Transverse colon (tissue), 4 donors: ENCODE measurements at regions of chr5 and their contacts with region 1.

Region 1: GRCh38 chr5:140401362-140402257 is at the start of gene ANKHD1:
- DNase-seq: peak; percentile 98
- H3K4me3 ChIP-seq: peak within 1 kb of the TSS; percentile 84 to 90 (median 89)
- H3K27ac ChIP-seq: peak within 1 kb of the TSS; percentile 94 to 99 (median 97)
- H3K4me1 ChIP-seq: peaks cover 18 to 41% (median 33%) of the 10 kb centered on the region in 4 donors
- H3K27me3 ChIP-seq: no peaks in the 10 kb centered on the region
- CTCF ChIP-seq: peak in 2 of 5 experiments; percentile 6 to 7
- EP300 ChIP-seq: no peak
- POLR2A ChIP-seq: peak; percentile 98
- total RNA-seq, gene ANKHD1: 113 to 212 (median 164) TPM

Region 2: DNA sequence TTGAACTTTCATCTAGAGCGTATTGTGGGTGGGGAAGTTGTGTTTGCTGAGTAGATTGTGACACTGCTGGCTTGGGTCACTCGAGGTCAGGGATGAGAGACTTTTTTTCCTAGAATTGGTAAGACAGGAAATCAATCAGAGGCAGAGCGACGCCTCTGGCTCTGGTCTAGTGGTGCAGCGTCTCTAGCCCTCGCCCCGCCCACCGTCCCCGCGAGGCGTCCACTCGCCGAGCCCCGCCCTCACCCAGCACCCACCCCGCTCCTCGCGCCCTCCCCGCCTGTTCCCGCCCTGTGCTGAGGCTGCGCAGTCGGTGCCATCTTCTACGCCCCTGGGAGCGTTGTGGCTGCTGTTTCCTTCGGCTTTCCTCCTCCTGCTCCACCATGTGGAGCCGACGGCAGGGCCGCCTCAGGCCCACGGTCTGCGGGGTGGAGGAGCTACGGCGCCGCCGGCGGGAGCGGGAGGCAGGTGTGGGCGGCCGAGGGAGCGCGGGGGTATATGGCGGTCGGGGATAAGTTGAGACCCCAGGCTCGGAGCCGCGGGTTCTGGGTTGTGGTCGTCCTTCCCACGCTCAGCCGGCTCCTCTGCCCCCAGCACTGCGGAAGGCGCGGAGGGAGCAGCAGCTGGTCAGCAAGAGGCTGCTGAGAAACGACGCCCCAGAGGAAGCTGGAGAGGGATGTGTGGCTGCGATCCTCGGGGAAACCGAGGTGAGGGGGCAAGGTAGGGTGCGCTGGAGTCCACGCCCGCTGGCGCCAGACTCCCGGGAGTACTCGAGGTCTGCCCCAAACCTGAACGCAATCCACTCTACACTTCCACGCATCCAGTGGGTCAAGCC is 237.8 kb after region 1 on chr5 and contains the start of gene TMCO6:
- in situ Hi-C with region 1: no loop called
- intact Hi-C with region 1: loop called (anchors 10 kb)
- DNase-seq: peak; percentile 99
- H3K4me3 ChIP-seq: peak within 1 kb of the TSS; percentile 62 to 95 (median 65)
- H3K27ac ChIP-seq: peak within 1 kb of the TSS; percentile 90 to 97 (median 92)
- H3K4me1 ChIP-seq: peaks cover 0 to 20% (median 14%) of the 10 kb centered on the region in 4 donors
- H3K27me3 ChIP-seq: no peaks in the 10 kb centered on the region
- CTCF ChIP-seq: peak; percentile 59 to 83 (median 70)
- EP300 ChIP-seq: no peak
- POLR2A ChIP-seq: peak; percentile 75
- total RNA-seq, gene TMCO6: 0.75 to 99.2 (median 40.2) TPM

Region 3: DNA sequence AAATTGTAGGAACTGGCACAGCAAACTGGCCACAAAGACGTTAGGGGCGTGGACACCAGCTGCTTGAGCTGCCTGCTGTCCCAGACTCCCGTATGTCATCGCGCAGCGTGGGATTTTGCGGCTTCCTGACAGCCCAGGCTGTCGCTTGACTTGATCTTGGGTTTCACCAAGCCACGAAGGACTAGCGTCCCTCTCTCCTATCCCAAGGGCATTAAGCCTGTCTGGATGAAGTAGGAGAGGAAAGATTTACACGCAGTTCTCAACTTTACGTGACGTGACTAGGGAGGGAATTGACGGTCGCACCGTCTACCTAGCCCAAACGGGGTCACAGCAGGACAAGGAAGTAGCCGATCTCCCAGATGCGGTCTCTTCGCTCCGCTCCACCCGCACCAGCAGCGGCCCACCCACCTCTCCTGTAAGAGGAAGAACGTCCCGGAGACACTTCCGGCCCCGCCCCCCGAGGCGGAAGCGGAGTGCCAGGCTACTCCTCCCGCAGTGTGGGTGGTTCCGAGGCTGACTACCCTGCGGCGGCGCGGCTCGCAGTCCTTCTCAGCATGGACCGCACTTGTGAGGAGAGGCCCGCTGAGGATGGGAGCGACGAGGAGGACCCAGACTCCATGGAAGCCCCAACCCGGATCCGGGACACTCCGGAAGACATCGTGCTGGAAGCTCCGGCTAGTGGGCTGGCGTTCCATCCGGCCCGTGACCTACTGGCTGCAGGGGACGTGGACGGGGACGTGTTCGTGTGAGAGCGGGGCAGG is 262.9 kb after region 1 on chr5 and contains the start of gene WDR55:
- in situ Hi-C with region 1: loop called in 1 of 4 experiments (anchors 25 kb)
- intact Hi-C with region 1: no loop called
- DNase-seq: peak; percentile 98
- H3K4me3 ChIP-seq: peak within 1 kb of the TSS; percentile 73 to 87 (median 79)
- H3K27ac ChIP-seq: peak within 1 kb of the TSS; percentile 88 to 95 (median 94)
- H3K4me1 ChIP-seq: peaks cover 12 to 27% (median 13%) of the 10 kb centered on the region in 4 donors
- H3K27me3 ChIP-seq: no peaks in the 10 kb centered on the region
- CTCF ChIP-seq: no peak
- EP300 ChIP-seq: peak; percentile 1
- POLR2A ChIP-seq: peak; percentile 93
- total RNA-seq, gene WDR55: 33.3 to 76.6 (median 36.1) TPM

Region 4: DNA sequence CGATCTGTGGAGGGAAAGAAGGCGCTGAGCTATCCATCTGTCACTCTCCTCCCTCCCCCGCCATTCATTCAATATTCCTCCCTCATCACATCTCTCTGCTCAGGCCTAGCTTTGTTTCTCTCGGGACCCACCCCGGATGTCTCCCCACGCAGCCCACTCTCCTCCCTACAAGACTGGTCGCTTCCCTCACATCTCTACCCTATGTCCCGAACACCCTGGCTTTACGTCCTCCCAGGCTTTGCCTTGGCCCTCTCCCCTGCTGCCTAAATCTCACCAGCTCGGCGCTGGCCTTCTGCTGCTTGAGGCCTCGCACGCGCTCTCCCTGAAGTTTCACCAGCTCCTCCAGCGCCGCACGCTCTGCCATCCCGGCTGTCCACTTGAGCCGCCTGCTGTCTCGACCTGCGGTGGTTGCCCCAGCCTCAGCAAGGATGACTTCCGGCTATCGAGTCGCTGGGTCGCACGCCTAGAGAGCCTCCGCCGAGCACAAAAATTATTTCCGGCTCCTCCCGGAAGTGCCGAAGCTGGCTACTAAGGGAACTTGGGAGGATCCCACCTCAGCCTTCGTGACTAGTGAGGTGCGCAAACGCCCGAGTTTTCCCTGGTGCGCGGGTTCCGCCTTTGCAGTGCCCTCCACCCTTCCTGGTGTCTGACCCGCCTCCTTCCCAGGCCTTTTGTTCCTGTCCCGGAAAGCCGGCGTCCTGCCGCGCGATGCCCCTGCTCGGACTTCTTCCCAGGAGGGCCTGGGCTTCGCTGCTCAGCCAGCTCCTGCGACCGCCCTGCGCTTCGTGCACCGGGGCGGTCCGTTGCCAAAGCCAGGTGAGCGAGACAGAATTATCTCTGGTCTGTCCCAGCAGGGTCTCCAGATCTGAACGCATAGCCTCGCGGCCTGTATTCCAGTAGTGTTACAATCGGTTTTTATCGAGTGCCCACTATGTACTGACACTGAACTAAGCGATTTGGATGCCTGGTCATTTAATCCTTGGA is 289.6 kb after region 1 on chr5 and contains the starts of genes HARS1 and HARS2:
- in situ Hi-C with region 1: loop called in 1 of 4 experiments (anchors 25 kb)
- intact Hi-C with region 1: no loop called
- DNase-seq: peak; percentile 94
- H3K4me3 ChIP-seq: peak within 1 kb of the TSS; percentile 64 to 75 (median 70)
- H3K27ac ChIP-seq: peak within 1 kb of the TSS; percentile 89 to 94 (median 92)
- H3K4me1 ChIP-seq: peaks cover 14 to 30% (median 16%) of the 10 kb centered on the region in 4 donors
- H3K27me3 ChIP-seq: no peaks in the 10 kb centered on the region
- CTCF ChIP-seq: no peak
- EP300 ChIP-seq: no peak
- POLR2A ChIP-seq: peak; percentile 75
- total RNA-seq, gene HARS1: 39.6 to 51.6 (median 43.9) TPM
- total RNA-seq, gene HARS2: 30.3 to 60.6 (median 41.4) TPM